T-cell (primary cell): ENCODE measurements at regions of chr17 and their contacts with region 1.

Region 1: DNA sequence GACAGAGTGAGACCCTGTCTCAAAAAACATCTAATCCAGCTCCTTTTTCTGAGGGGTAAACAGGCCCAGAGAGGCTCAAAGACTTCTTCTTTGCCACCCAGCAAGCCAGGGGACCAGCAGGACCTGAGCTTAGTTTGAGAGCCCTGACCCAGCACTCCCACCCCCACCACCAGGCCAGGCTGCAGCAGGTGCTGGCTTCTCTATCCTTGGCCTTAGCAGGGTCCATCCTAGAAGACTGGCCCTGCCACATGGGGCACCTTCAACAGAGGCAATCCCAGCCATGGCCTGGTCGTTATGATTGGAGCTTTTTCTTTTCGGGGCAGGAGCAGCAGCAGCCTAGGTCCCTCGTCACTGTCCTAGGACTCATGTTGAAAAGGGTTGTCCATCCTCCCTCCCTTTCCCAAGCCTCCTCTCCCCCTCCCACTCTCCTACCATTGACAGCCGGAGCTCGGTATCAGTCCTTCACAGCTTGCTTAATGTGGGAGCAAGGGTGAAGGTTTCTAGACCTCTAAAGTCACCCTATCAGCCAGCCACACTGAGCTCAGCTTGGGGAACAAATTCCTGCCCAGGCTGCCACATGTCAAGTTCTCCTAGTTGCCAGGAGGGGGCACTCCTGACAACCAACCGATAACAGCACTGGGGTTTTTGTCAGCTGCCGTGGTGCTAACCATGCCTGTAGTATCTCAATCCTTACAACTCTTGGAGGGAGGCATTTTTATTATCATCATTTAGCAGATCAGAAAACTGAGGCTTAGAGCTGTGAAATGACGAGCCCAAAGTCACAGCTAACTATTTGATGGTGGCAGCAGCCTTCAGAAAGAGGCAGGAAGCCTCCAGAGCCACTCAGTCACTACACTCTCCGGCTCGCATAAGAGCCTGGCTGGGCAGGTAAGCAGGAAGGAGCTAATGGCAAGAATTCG is 11.2 kb downstream of the MRPL27 start:
- DNase-seq: peak in 33 of 35 experiments; percentile 28 to 82 (median 50)
- ATAC-seq: peak; percentile 80 to 88 (median 86)
- H3K4me3 ChIP-seq: no peak overlapping the region
- H3K4me3 Mint-ChIP-seq: peak overlapping the region; percentile 13 to 33 (median 26)
- H3K27ac ChIP-seq: peak overlapping the region; percentile 20
- H3K27ac Mint-ChIP-seq: peak overlapping the region; percentile 71 to 73
- H3K4me1 ChIP-seq: peaks cover 0 to 23% of the 10 kb centered on the region in 2 experiments
- H3K4me1 Mint-ChIP-seq: peaks cover 8 to 11% (median 11%) of the 10 kb centered on the region in 3 donors
- H3K27me3 ChIP-seq: no peaks in the 10 kb centered on the region
- H3K27me3 Mint-ChIP-seq: no peaks in the 10 kb centered on the region

Region 2: DNA sequence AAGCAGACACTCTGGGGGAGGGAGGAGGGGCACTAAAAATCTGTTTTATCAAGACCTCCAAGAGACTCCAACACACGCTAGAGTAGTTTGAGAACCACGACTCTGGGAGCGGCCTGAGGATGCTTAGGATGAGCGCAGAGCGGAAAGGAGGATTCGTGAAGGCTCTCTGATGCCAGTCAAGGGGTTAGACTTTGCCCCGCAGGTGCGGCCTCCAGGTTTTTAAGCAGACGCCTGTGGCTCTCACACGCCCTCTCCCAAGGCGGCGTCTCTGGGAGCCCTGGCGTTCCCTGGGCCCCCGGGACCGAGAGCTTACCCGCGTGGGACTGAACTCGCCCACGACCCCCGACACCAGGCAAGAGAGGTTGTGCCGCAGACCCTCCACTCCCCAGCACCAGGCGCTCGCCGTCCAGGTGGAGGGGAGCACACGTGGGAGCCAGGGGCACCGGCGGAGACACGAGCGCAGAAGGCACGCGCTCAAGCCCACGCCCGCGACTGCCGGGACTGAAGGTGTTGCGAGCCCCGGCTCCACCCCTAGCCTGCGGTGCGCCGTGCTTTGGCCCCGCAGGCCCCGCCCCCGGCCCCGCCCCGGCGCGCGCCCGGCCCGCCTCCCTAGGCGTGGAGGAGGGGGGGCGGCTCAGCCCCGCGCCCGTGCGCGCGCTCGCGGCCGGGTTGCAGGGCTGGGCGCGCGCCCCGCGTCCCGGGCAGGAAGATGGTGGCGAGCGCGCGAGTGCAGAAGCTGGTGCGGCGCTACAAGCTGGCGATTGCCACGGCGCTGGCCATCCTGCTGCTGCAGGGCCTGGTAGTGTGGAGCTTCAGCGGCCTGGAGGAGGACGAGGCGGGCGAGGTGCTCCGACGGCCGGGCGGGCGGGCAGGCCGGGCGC is 16.1 kb before region 1 on chr17 and contains the start of gene XYLT2:
- CTCF ChIA-PET with region 1: interaction called, 3 to 5 read pairs
- POLR2A ChIA-PET with region 1: interaction called in 1 of 2 experiments, 16 read pairs
- DNase-seq: peak; percentile 78 to 97 (median 88)
- ATAC-seq: peak; percentile 90 to 96 (median 92)
- H3K4me3 ChIP-seq: peak within 1 kb of the TSS; percentile 73 to 91
- H3K4me3 Mint-ChIP-seq: peak within 1 kb of the TSS; percentile 82 to 91 (median 88)
- H3K27ac ChIP-seq: peak within 1 kb of the TSS; percentile 62
- H3K27ac Mint-ChIP-seq: peak within 1 kb of the TSS; percentile 91 to 93
- H3K4me1 ChIP-seq: peaks cover 8 to 31% of the 10 kb centered on the region in 2 experiments
- H3K4me1 Mint-ChIP-seq: peaks cover 30 to 38% (median 31%) of the 10 kb centered on the region in 3 donors
- H3K27me3 ChIP-seq: peaks cover 0 to 4% of the 10 kb centered on the region in 2 experiments
- H3K27me3 Mint-ChIP-seq: no peaks in the 10 kb centered on the region
- total RNA-seq, gene XYLT2: 20.4 to 44.4 (median 40.8) TPM

Region 3: DNA sequence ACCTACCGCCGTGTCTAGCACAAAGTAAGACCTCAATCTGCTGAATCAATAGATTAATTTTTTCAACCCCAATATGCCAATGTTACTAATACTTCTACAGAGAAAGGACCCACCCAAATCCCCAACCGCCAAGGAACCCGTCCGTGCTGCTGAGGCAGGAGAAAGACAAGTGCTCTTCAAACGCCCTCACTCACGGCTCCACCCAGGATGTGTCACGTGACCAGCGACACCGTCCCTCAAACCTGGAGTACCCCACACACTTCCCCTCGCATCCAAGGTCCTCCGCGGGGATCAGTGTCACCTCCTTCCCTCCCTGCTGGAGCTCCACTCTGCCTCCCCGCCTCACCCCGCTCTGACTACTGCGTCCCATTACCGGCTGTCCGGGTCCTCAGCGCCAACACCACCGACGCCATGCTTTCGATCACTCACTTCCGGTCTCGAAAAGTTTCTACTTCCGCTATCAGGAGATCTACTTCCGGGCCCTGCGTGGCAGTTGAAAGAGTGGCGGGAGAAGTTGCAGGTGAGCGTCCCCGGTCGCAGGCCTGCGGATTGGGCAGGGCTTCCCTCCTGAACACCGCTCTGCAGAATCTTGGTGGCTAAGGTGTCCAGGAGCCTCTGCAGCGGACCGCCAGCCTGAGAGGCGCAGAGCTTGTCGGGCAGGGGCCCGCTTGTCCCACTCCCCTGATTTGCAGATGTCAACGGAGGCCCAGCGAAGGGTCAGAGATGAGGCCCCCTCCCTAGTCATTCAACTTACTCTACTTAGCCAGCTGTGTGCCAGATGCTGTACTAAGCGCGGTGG is 11.1 kb after region 1 on chr17 and contains the starts of genes EME1 and MRPL27:
- CTCF ChIA-PET with region 1: interaction called, 6 to 10 read pairs
- POLR2A ChIA-PET with region 1: interaction called in 1 of 2 experiments, 3 read pairs
- DNase-seq: peak; percentile 72 to 91 (median 83)
- ATAC-seq: peak; percentile 92 to 95 (median 94)
- H3K4me3 ChIP-seq: peak within 1 kb of the TSS; percentile 86 to 94
- H3K4me3 Mint-ChIP-seq: peak within 1 kb of the TSS; percentile 91 to 99 (median 99)
- H3K27ac ChIP-seq: peak within 1 kb of the TSS; percentile 89
- H3K27ac Mint-ChIP-seq: peak within 1 kb of the TSS; percentile 100
- H3K4me1 ChIP-seq: peaks cover 5 to 24% of the 10 kb centered on the region in 2 experiments
- H3K4me1 Mint-ChIP-seq: peaks cover 22 to 33% (median 26%) of the 10 kb centered on the region in 3 donors
- H3K27me3 ChIP-seq: no peaks in the 10 kb centered on the region
- H3K27me3 Mint-ChIP-seq: no peaks in the 10 kb centered on the region
- total RNA-seq, gene EME1: 0.75 to 2.1 (median 1.4) TPM
- total RNA-seq, gene MRPL27: 26.0 to 35.0 (median 31.2) TPM

Region 4: DNA sequence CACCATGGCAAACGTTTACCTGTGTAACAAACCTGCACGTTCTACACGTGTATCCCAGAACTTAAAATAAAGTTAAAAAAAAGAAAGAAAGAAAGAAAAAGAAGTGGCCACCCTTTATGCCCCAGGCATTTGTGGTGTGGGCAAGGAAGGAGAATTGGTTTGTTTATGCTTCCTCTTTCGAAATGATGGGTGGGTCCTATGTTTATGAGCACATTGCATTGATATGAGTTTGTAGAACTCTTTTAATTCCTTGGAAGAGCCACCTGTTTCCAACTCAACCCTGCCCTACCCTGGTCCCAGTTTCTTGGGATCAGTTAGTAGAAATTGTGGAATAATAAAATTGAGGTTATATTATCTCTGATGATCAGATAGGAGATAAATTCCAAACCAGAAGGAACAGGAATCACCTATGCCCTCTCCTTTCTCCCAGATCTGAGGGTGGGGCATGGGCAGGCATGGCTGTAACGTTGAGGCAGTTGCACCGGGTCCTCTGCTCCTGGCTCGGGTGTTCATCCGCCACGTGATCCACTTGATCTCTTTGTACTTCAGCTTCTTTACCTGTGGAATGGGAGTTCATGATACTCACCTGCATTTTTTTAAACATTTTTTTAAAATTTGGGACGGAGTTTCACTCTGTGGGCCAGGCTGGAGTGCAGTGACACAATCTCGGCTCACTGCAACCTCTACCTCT is 90.9 kb after region 1 on chr17:
- CTCF ChIA-PET with region 1: no interaction called
- POLR2A ChIA-PET with region 1: no interaction called
- DNase-seq: no peak
- ATAC-seq: no peak
- H3K4me3 ChIP-seq: no peak overlapping the region
- H3K4me3 Mint-ChIP-seq: no peak overlapping the region
- H3K27ac ChIP-seq: no peak overlapping the region
- H3K27ac Mint-ChIP-seq: no peak overlapping the region
- H3K4me1 ChIP-seq: no peaks in the 10 kb centered on the region
- H3K4me1 Mint-ChIP-seq: peaks cover 0 to 2% (median 0%) of the 10 kb centered on the region in 3 donors
- H3K27me3 ChIP-seq: no peaks in the 10 kb centered on the region
- H3K27me3 Mint-ChIP-seq: no peaks in the 10 kb centered on the region